Heart left ventricle (tissue), 16 donors: ENCODE measurements at regions of chr13 and their contacts with region 1.

Region 1: DNA sequence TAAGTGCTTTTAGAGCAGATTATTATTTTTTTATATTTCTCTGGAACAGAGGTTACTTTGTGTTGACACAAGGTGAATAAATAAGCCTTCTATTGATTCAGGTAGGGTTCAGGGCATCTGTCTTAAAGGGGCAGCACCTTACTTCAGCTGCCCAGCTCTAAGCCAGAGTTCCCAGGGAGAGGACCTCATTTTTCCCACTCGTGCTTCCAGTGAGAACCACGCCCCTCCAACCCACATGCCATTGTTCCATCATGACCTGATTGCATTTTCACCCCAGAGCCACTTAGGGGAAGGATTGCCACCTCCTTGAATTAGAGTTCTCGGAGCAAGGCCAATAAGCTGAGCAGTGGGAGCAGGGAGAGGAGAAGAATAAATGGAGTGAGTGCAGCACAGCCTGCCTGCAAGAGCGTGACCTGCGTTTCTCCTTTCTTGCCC is 104.3 kb upstream of the FRY start:
- DNase-seq: peak in 1 of 5 donors; percentile 31
- ATAC-seq: peak; percentile 52 to 79 (median 54)
- H3K4me3 ChIP-seq: no peak overlapping the region
- H3K27ac ChIP-seq: peak overlapping the region in 1 of 12 donors; percentile 10
- H3K4me1 ChIP-seq: peaks cover 0 to 59% (median 41%) of the 10 kb centered on the region in 12 donors
- H3K27me3 ChIP-seq: no peaks in the 10 kb centered on the region
- CTCF ChIP-seq: no peak
- POLR2A ChIP-seq: no peak

Region 2: GRCh38 chr13:31870511-31870910 is 56.7 kb before region 1 on chr13:
- intact Hi-C with region 1: no loop called
- DNase-seq: no peak
- ATAC-seq: peak in 1 of 4 donors; percentile 45
- H3K4me3 ChIP-seq: no peak overlapping the region
- H3K27ac ChIP-seq: peak overlapping the region in 1 of 12 donors; percentile 14
- H3K4me1 ChIP-seq: peaks cover 0 to 67% (median 33%) of the 10 kb centered on the region in 12 donors
- H3K27me3 ChIP-seq: no peaks in the 10 kb centered on the region
- CTCF ChIP-seq: no peak
- POLR2A ChIP-seq: no peak

Region 3: GRCh38 chr13:31965361-31966066 is 38.3 kb after region 1 on chr13:
- intact Hi-C with region 1: loop called in 1 of 10 experiments (anchors 1 kb)
- DNase-seq: no peak
- ATAC-seq: peak in 1 of 4 donors; percentile 54
- H3K4me3 ChIP-seq: no peak overlapping the region
- H3K27ac ChIP-seq: peak overlapping the region in 7 of 12 donors; percentile 5 to 44 (median 30)
- H3K4me1 ChIP-seq: peaks cover under 1 to 64% (median 40%) of the 10 kb centered on the region in 12 donors
- H3K27me3 ChIP-seq: no peaks in the 10 kb centered on the region
- CTCF ChIP-seq: no peak
- POLR2A ChIP-seq: no peak

Region 4: DNA sequence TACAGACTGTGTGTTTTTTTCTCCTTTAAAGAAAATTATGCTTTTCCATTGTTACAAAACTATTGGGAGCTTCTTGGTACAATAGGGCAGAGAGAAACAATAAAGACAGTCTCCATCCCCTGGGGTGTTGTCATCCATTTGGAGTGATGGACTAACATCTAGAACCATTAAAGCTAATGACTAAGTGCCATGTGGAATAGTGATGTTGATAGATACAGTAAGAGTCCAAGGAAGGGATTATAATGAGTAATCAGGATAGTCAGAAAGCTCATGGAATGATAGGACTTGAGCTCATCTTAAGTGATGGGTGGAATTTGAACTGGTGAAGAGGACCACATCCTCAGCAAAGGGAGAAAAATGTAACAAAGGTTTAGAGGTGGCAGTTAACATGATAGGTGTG is 80.3 kb after region 1 on chr13:
- intact Hi-C with region 1: loop called in 1 of 10 experiments (anchors 5 kb)
- DNase-seq: no peak
- ATAC-seq: no peak
- H3K4me3 ChIP-seq: no peak overlapping the region
- H3K27ac ChIP-seq: no peak overlapping the region
- H3K4me1 ChIP-seq: peaks cover 0 to 33% (median 12%) of the 10 kb centered on the region in 12 donors
- H3K27me3 ChIP-seq: no peaks in the 10 kb centered on the region
- CTCF ChIP-seq: no peak
- POLR2A ChIP-seq: no peak